ENCODE measurements at regions of chrX and their contacts with region 1.

Region 1: GRCh38 chrX:149286940-149287349 is 218.2 kb downstream of the IDS start:
- DNase-seq: no peak
- H3K4me3 ChIP-seq: no peak overlapping the region
- H3K27ac ChIP-seq: no peak overlapping the region
- H3K4me1 ChIP-seq: no peaks in the 10 kb centered on the region
- H3K27me3 ChIP-seq: no peaks in the 10 kb centered on the region
- CTCF ChIP-seq: peak in 10 of 11 experiments; percentile 37 to 79 (median 62)
- POLR2A ChIP-seq: no peak

Region 2: DNA sequence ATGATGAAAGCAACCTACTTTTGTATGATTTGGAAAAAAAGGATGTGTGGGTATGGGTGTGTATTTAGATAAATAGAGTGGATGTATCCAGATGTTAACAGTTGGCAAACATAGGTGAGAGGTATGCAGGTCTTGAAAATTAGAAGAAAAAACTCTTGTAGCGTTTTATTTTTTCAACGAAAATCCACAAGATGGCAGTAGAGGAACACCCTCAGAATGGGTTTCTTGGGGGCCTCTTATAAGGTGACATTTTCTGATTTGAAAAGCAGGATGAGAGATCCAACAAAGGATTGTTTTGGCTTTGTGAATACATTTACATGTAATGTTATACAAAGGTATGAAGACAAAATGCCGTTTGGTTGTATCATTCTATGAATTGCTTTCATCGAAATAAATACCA is 1237.5 kb before region 1 on chrX:
- intact Hi-C with region 1: loop called (anchors 5 kb)
- DNase-seq: no peak
- H3K4me3 ChIP-seq: no peak overlapping the region
- H3K27ac ChIP-seq: no peak overlapping the region
- H3K4me1 ChIP-seq: no peaks in the 10 kb centered on the region
- H3K27me3 ChIP-seq: no peaks in the 10 kb centered on the region
- CTCF ChIP-seq: peak in 6 of 11 experiments; percentile 27 to 48 (median 40)
- POLR2A ChIP-seq: no peak

Region 3: DNA sequence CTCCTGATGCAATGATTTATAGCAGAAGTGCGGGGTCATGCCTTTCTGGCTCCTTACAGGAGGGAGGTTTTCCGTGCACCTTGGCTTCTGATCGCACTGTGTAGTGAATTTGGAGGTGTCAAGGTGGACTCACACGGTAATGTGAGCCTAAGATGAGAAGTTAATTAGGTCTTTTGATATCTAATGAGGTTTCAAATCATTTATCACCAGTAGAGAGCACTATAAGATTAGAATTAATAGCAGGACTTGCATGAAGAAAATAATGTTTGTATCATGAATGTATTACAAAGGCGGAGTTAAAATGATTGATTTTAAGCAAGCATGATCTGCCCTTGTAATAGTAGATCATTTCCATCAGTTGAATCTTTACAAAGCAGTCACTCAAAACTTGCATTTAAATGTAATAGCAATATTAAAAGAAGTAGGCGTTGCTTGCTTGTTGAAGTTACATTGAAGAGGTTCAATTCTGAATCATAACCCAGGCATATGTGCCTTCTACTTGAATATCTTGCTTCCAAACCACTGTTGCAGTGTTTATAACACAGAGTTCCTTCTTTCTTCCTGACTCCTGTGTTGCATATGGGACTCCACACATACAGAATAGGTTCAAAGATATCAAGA is 1153.7 kb before region 1 on chrX:
- intact Hi-C with region 1: loop called (anchors 5 kb)
- DNase-seq: no peak
- H3K4me3 ChIP-seq: no peak overlapping the region
- H3K27ac ChIP-seq: no peak overlapping the region
- H3K4me1 ChIP-seq: no peaks in the 10 kb centered on the region
- H3K27me3 ChIP-seq: no peaks in the 10 kb centered on the region
- CTCF ChIP-seq: peak in 3 of 11 experiments; percentile 10 to 19 (median 12)
- POLR2A ChIP-seq: no peak